Breast epithelium (tissue), 4 donors: ENCODE measurements at regions of chr2 and their contacts with region 1.

Region 1: GRCh38 chr2:69012310-69013141 is 453 bp upstream of the ANTXR1 start:
- DNase-seq: peak in 1 of 2 donors; percentile 35
- H3K4me3 ChIP-seq: peak overlapping the region; percentile 61 to 95 (median 69)
- H3K27ac ChIP-seq: peak overlapping the region; percentile 76 to 92
- H3K4me1 ChIP-seq: no peaks in the 10 kb centered on the region
- H3K27me3 ChIP-seq: no peaks in the 10 kb centered on the region
- CTCF ChIP-seq: peak; percentile 78 to 82 (median 81)
- POLR2A ChIP-seq: no peak

Region 2: DNA sequence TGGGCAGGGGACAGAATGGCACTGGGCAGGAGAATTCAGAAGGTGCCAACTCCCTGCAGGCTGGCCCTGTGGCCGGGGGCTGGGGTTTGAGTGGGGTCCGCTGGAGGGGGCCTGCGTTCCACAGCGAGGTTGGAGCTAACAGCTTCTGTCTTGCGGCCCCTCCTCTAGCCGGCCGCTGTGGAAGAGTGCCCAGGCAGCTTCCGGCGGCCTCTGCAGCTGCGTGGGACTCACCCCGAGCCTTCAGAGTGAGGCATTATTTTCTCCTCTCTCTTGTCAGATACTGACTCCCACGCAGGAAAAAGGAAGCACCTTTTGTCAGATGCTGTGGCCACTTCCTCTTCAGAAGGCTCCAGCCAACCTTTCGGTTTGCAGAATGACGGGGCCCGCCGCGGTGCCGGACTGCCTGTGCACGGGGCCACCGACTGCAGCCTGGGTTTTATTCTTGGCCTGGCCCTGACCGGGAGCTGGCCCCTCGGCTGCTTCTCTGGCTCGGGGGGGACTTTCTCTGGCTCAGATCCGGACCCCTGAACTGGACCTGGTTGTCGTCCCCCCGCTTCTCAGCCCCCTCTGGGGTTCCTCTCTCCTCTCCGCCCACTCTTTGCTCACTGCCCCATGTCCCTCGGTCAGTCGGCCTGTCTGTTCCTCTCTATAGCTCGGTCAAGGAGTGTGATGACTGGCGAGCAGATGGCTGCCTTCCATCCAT is 237.8 kb before region 1 on chr2:
- intact Hi-C with region 1: no loop called
- DNase-seq: peak in 1 of 2 donors; percentile 43
- H3K4me3 ChIP-seq: peak overlapping the region; percentile 34 to 68 (median 44)
- H3K27ac ChIP-seq: peak overlapping the region; percentile 53 to 88
- H3K4me1 ChIP-seq: no peaks in the 10 kb centered on the region
- H3K27me3 ChIP-seq: no peaks in the 10 kb centered on the region
- CTCF ChIP-seq: no peak
- POLR2A ChIP-seq: no peak

Region 3: GRCh38 chr2:69046221-69046662 is 33.7 kb after region 1 on chr2:
- intact Hi-C with region 1: no loop called
- DNase-seq: no peak
- H3K4me3 ChIP-seq: no peak overlapping the region
- H3K27ac ChIP-seq: peak overlapping the region; percentile 52 to 70
- H3K4me1 ChIP-seq: no peaks in the 10 kb centered on the region
- H3K27me3 ChIP-seq: no peaks in the 10 kb centered on the region
- CTCF ChIP-seq: no peak
- POLR2A ChIP-seq: no peak

Region 4: GRCh38 chr2:69306822-69307578 is 294.5 kb after region 1 on chr2:
- intact Hi-C with region 1: loop called (anchors 10 kb)
- DNase-seq: peak; percentile 74 to 76
- H3K4me3 ChIP-seq: peak overlapping the region; percentile 59 to 83 (median 66)
- H3K27ac ChIP-seq: peak overlapping the region; percentile 88 to 91
- H3K4me1 ChIP-seq: peaks cover 4 to 26% of the 10 kb centered on the region in 2 donors
- H3K27me3 ChIP-seq: no peaks in the 10 kb centered on the region
- CTCF ChIP-seq: peak in 2 of 3 donors; percentile 76 to 83
- POLR2A ChIP-seq: no peak